OCI-LY7 (cell line): ENCODE measurements at regions of chr14 and their contacts with region 1.

Region 1: DNA sequence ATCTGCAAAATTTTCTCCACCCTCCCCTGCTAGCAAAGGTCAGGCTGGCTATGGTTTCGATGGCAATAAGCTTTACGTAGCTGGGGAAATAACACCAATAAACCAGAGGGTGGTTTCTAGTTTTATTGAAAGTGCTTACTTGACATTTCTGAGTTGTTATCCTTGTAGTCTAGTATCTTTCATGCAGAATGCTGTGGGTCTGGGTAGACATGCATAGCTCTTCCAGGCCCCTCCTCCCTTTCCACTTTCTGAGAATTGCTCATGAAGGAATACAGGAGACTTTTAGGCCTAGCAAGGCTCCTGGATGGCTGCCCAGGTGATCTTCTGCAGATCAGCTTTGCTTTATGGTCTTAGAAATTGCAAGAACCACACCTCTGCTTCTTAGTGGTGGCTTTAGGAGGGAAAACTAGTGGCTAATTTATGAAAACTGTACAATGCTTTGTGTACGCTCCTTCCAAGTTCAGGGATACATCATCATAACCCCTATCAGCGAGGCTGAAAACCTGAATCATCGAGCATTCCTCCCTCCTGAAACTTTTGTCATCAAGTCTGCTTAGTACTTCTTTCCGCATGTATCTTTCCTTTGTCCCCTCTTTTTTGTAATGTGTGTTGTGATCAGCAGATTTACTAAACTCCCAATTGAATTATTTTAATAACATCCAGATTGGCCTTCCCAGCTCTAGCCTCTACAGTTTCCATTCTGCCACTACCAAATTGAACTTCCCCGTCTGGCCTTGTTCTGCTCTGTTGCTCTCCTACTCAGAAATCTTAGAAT is 473.0 kb downstream of the RAD51B start:
- DNase-seq: no peak
- H3K4me3 ChIP-seq: peak overlapping the region; percentile 31
- H3K27ac ChIP-seq: peak overlapping the region; percentile 81
- H3K4me1 ChIP-seq: peaks cover 64% of the 10 kb centered on the region
- CTCF ChIP-seq: no peak

Region 2: DNA sequence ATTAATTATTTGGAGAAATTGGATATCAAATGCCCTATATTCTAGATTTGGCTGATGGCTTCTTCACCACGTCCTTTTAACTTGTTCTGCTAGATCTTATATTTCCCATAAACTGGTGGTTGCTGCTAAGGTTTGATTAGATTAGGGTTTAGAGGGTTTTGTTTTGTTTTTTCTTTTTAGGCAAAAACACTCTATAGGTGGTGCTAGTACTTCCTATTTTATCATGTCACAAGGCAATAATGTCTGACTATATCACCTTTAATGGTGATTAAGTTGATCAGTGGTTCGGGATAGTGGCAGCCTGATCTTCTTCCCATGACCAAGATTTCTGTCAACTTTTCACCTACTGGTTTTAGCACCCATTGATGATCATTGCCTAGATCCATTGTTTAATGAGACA is 17.9 kb before region 1 on chr14:
- CTCF ChIA-PET with region 1: no interaction called
- POLR2A ChIA-PET with region 1: interaction called, 20 read pairs
- intact Hi-C with region 1: no loop called
- DNase-seq: no peak
- H3K4me3 ChIP-seq: peak overlapping the region; percentile 29
- H3K27ac ChIP-seq: peak overlapping the region; percentile 92
- H3K4me1 ChIP-seq: peaks cover 97% of the 10 kb centered on the region
- CTCF ChIP-seq: peak; percentile 74

Region 3: GRCh38 chr14:68307014-68307789 is 14.6 kb after region 1 on chr14:
- CTCF ChIA-PET with region 1: interaction called, 3 read pairs
- POLR2A ChIA-PET with region 1: interaction called, 15 read pairs
- intact Hi-C with region 1: no loop called
- DNase-seq: no peak
- H3K4me3 ChIP-seq: no peak overlapping the region
- H3K27ac ChIP-seq: peak overlapping the region; percentile 49
- H3K4me1 ChIP-seq: peaks cover 64% of the 10 kb centered on the region
- CTCF ChIP-seq: no peak

Region 4: GRCh38 chr14:69501423-69501838 is 1208.8 kb after region 1 on chr14:
- CTCF ChIA-PET with region 1: no interaction called
- POLR2A ChIA-PET with region 1: no interaction called
- intact Hi-C with region 1: no loop called
- DNase-seq: no peak
- H3K4me3 ChIP-seq: no peak overlapping the region
- H3K27ac ChIP-seq: no peak overlapping the region
- H3K4me1 ChIP-seq: no peaks in the 10 kb centered on the region
- CTCF ChIP-seq: no peak